HepG2 (cell line): ENCODE measurements at regions of chr15 and their contacts with region 1.

Region 1: GRCh38 chr15:86915811-86916331 is 836.2 kb downstream of the AGBL1 start:
- DNase-seq: peak; percentile 31
- ATAC-seq: peak; percentile 85
- H3K4me3 ChIP-seq: no peak overlapping the region
- H3K27ac ChIP-seq: no peak overlapping the region
- H3K4me1 ChIP-seq: no peaks in the 10 kb centered on the region
- H3K27me3 ChIP-seq: peaks cover 0 to 5% of the 10 kb centered on the region in 2 experiments; a peak in 2 of 5 replicates
- CTCF ChIP-seq: peak; percentile 65
- EP300 ChIP-seq: no peak
- POLR2A ChIP-seq: no peak
- RAD21 ChIP-seq: 0 out of 2 replicates have a peak, but pooled peaks have one; percentile 22

Region 2: DNA sequence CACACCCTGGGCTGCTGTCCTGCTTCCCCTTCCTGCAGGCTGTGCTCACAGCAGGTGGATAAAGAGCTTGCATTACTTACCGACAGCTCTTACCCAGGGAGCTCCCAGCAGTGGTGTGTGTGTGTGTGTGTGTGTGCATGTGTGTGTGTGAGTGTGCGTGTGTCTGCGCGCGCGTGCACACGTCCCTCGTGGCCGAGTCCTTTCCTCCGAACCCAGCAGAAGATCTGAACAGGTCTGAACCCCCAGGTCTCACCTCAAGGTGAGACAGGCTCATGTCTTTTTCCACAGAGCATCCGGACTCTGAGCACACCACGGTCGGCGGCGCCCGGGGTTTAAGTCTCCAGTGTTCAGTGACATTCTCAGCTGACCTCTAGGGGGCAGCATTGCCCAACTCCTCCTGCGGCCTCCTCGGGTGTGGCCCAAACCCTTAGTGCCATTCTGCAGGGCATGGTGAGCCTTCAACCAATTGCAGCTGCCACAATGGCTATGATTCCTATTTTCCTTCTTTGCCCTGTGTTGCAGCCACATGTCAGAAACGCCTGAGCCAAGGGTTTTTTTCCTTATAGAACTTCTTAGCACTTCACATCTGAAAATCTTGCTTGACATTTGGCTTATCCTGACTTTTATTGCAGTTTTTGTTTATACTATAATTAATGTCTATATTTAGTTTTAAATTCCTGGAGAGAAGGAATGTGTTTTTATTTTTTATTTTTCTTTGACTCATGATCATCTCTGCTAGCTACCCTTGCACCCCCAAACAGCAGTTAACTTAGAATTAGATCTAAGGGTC is 1057.1 kb before region 1 on chr15:
- CTCF ChIA-PET with region 1: no interaction called
- POLR2A ChIA-PET with region 1: no interaction called
- in situ Hi-C with region 1: loop called (anchors 25 kb)
- intact Hi-C with region 1: no loop called
- DNase-seq: peak; percentile 34
- ATAC-seq: peak; percentile 96
- H3K4me3 ChIP-seq: no peak overlapping the region; a peak in 1 of 6 replicates
- H3K27ac ChIP-seq: no peak overlapping the region
- H3K4me1 ChIP-seq: no peaks in the 10 kb centered on the region
- H3K27me3 ChIP-seq: peaks cover 0 to 1% of the 10 kb centered on the region in 2 experiments; a peak in 1 of 5 replicates
- CTCF ChIP-seq: peak; percentile 87
- EP300 ChIP-seq: no peak
- POLR2A ChIP-seq: no peak
- RAD21 ChIP-seq: peak; percentile 43; the same call in 1 of the 2 replicates

Region 3: GRCh38 chr15:87038404-87038803 is 122.5 kb after region 1 on chr15:
- CTCF ChIA-PET with region 1: no interaction called
- POLR2A ChIA-PET with region 1: no interaction called
- in situ Hi-C with region 1: no loop called
- intact Hi-C with region 1: no loop called
- DNase-seq: no peak
- ATAC-seq: no peak
- H3K4me3 ChIP-seq: no peak overlapping the region
- H3K27ac ChIP-seq: no peak overlapping the region
- H3K4me1 ChIP-seq: no peaks in the 10 kb centered on the region
- H3K27me3 ChIP-seq: no peaks in the 10 kb centered on the region
- CTCF ChIP-seq: no peak
- EP300 ChIP-seq: no peak
- POLR2A ChIP-seq: no peak
- RAD21 ChIP-seq: no peak

Region 4: GRCh38 chr15:87672309-87673288 is 756.7 kb after region 1 on chr15:
- CTCF ChIA-PET with region 1: no interaction called
- POLR2A ChIA-PET with region 1: no interaction called
- in situ Hi-C with region 1: no loop called
- intact Hi-C with region 1: loop called (anchors 5 kb)
- DNase-seq: no peak
- ATAC-seq: no peak
- H3K4me3 ChIP-seq: no peak overlapping the region
- H3K27ac ChIP-seq: no peak overlapping the region
- H3K4me1 ChIP-seq: no peaks in the 10 kb centered on the region
- H3K27me3 ChIP-seq: no peaks in the 10 kb centered on the region; a peak in 1 of 5 replicates
- CTCF ChIP-seq: no peak
- EP300 ChIP-seq: no peak
- POLR2A ChIP-seq: no peak
- RAD21 ChIP-seq: no peak

Region 5: GRCh38 chr15:88246666-88247446 is 1331.0 kb after region 1 on chr15:
- CTCF ChIA-PET with region 1: interaction called, 7 read pairs
- POLR2A ChIA-PET with region 1: no interaction called
- in situ Hi-C with region 1: loop called (anchors 10 kb)
- intact Hi-C with region 1: no loop called
- DNase-seq: peak; percentile 44
- ATAC-seq: peak; percentile 93
- H3K4me3 ChIP-seq: no peak overlapping the region
- H3K27ac ChIP-seq: no peak overlapping the region
- H3K4me1 ChIP-seq: no peaks in the 10 kb centered on the region
- H3K27me3 ChIP-seq: peaks cover 3 to 4% of the 10 kb centered on the region in 2 experiments; a peak in 2 of 5 replicates
- CTCF ChIP-seq: peak; percentile 92
- EP300 ChIP-seq: no peak
- POLR2A ChIP-seq: no peak
- RAD21 ChIP-seq: peak; percentile 66

Region 6: GRCh38 chr15:88454867-88455810 is 1539.3 kb after region 1 on chr15:
- CTCF ChIA-PET with region 1: no interaction called
- POLR2A ChIA-PET with region 1: no interaction called
- in situ Hi-C with region 1: no loop called
- intact Hi-C with region 1: loop called (anchors 10 kb)
- DNase-seq: peak; percentile 48
- ATAC-seq: peak; percentile 91
- H3K4me3 ChIP-seq: no peak overlapping the region
- H3K27ac ChIP-seq: no peak overlapping the region
- H3K4me1 ChIP-seq: peaks cover 12% of the 10 kb centered on the region; the same call in 1 of the 2 replicates
- H3K27me3 ChIP-seq: no peaks in the 10 kb centered on the region
- CTCF ChIP-seq: peak; percentile 78
- EP300 ChIP-seq: no peak
- POLR2A ChIP-seq: peak in 1 of 2 experiments; percentile 30; a peak in 1 of 4 replicates
- RAD21 ChIP-seq: peak; percentile 56; the same call in 1 of the 2 replicates